Activated T-helper 2 cell treated with anti-CD3 and anti-CD28 coated beads, Interferon-gamma antibody, Interleukin-2, Interleukin-4, amounts not matched to agents 10 μg/mL and 5 μg/mL and 100 μg/mL, durations not matched to agents 14 hours and 24 hours and 36 hours (primary cell): ENCODE measurements at regions of chrX and their contacts with region 1.

Region 1: GRCh38 chrX:107627838-107628661 is at the start of gene PRPS1:
- DNase-seq: peak; percentile 86
- H3K4me3 Mint-ChIP-seq: peak within 1 kb of the TSS; percentile 88
- H3K27ac Mint-ChIP-seq: peak within 1 kb of the TSS; percentile 92
- H3K4me1 Mint-ChIP-seq: peaks cover 26% of the 10 kb centered on the region
- H3K27me3 Mint-ChIP-seq: no peaks in the 10 kb centered on the region
- total RNA-seq, gene PRPS1: 94.4 and 94.5 TPM in 2 replicates

Region 2: GRCh38 chrX:107537815-107538214 is 90.2 kb before region 1 on chrX:
- intact Hi-C with region 1: loop called (anchors 2 kb)
- DNase-seq: peak; percentile 8
- H3K4me3 Mint-ChIP-seq: no peak overlapping the region
- H3K27ac Mint-ChIP-seq: no peak overlapping the region
- H3K4me1 Mint-ChIP-seq: no peaks in the 10 kb centered on the region
- H3K27me3 Mint-ChIP-seq: peaks cover 9% of the 10 kb centered on the region

Region 3: GRCh38 chrX:107571296-107571998 is 56.6 kb before region 1 on chrX:
- intact Hi-C with region 1: loop called (anchors 10 kb)
- DNase-seq: no peak
- H3K4me3 Mint-ChIP-seq: no peak overlapping the region
- H3K27ac Mint-ChIP-seq: no peak overlapping the region
- H3K4me1 Mint-ChIP-seq: peaks cover 7% of the 10 kb centered on the region
- H3K27me3 Mint-ChIP-seq: peaks cover 8% of the 10 kb centered on the region

Region 4: DNA sequence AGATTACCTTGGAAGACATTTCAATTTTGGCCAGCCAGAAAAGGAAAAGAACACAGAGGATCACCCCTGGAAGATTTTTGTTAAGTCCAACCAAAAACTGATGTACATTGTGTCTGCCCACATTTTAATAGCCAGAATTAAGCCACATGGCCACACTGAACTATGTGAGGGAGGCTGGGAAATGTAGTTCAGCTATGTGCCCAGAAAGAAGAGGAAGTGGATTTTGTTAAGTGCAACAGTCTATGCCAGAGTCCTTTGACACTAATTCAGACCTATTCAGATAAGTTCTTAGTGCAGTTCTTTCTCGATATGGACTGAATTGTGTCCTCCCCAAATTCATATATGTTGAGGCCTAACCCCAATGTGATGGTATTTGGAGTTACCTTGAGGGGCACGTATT is 18.7 kb after region 1 on chrX:
- intact Hi-C with region 1: loop called (anchors 2 kb)
- DNase-seq: no peak
- H3K4me3 Mint-ChIP-seq: no peak overlapping the region
- H3K27ac Mint-ChIP-seq: no peak overlapping the region
- H3K4me1 Mint-ChIP-seq: peaks cover 2% of the 10 kb centered on the region
- H3K27me3 Mint-ChIP-seq: no peaks in the 10 kb centered on the region

Region 5: DNA sequence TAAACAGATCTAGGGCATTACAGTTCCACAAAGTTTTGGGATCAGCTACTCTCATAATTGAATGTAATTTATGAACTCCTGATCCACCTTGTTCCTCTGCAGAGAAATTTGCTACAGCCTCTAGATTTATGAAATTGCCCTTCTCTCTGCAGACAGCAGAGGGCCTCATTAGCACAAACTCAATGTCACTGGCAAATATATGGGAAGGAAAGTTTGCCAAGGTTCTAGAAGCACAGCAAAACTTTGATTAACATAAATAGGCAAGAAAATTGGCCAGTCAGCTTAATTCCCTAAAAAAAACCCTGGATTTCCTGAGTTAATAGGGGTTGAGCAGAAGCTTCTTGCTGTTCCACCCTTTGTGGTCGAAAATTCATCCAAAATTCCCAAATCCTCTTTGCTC is 31.7 kb after region 1 on chrX:
- intact Hi-C with region 1: no loop called
- DNase-seq: no peak
- H3K4me3 Mint-ChIP-seq: no peak overlapping the region
- H3K27ac Mint-ChIP-seq: no peak overlapping the region
- H3K4me1 Mint-ChIP-seq: peaks cover 5% of the 10 kb centered on the region
- H3K27me3 Mint-ChIP-seq: no peaks in the 10 kb centered on the region

Region 6: GRCh38 chrX:107672955-107673378 is 44.9 kb after region 1 on chrX:
- intact Hi-C with region 1: loop called (anchors 1 kb)
- DNase-seq: peak; percentile 74
- H3K4me3 Mint-ChIP-seq: peak overlapping the region; percentile 54
- H3K27ac Mint-ChIP-seq: peak overlapping the region; percentile 99
- H3K4me1 Mint-ChIP-seq: peaks cover 37% of the 10 kb centered on the region
- H3K27me3 Mint-ChIP-seq: no peaks in the 10 kb centered on the region

Region 7: DNA sequence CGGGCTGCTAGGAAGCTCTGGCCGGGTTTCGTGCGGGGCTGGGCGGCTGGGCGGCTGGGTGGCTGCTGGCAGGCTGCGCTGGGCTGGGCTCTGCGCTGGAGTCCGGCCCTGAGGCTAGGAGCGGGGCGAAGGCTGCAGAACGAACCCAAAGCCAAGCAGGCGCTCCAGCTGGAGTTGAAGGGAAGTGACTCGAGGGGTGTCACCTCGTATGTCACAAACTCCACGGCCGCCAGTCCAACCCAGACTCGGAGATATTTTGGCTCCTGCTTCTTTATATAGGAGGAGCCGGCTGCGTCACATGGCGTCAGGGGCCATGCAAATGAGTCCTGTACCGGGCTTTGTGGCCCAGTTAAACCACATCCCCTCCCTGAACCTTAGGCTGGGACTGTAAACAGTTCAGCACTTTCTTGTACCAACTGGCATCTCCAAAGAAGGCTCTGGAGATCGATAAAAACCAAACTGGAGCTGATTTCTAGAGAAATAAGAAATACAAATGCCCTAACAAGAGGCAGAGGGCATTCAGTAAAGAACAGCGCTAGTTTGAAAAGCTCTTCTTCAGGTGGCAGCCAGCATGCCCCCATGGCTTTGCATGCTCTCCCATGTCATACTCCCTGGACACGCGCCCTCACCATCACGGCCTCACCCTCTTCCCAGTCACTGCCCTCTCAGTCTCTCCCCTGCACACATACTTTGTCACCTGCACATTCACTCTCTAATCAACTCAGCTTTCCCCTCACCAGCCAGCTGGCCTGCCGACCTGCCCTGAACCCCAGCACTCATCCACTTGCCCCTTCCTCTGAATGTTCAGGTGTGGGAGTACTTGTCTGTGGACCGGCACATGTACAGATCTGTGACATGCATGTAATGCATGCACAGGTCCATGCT is 89.0 kb after region 1 on chrX:
- intact Hi-C with region 1: loop called (anchors 1 kb)
- DNase-seq: peak; percentile 85
- H3K4me3 Mint-ChIP-seq: peak overlapping the region; percentile 93
- H3K27ac Mint-ChIP-seq: peak overlapping the region; percentile 87
- H3K4me1 Mint-ChIP-seq: peaks cover 39% of the 10 kb centered on the region
- H3K27me3 Mint-ChIP-seq: no peaks in the 10 kb centered on the region